Spleen (tissue), 13 donors: ENCODE measurements at regions of chr21 and their contacts with region 1.

Region 1: GRCh38 chr21:26170471-26171257 is at the start of gene APP:
- DNase-seq: peak; percentile 98
- H3K4me3 ChIP-seq: peak within 1 kb of the TSS; percentile 67 to 98 (median 94)
- H3K27ac ChIP-seq: peak within 1 kb of the TSS; percentile 76 to 89 (median 85)
- H3K4me1 ChIP-seq: peaks cover 0 to 53% (median 37%) of the 10 kb centered on the region in 6 donors
- H3K27me3 ChIP-seq: peaks cover 0 to 22% (median 0%) of the 10 kb centered on the region in 7 donors
- CTCF ChIP-seq: peak; percentile 52 to 100 (median 97)
- POLR2A ChIP-seq: peak in 2 of 3 donors; percentile 15 to 47
- total RNA-seq, gene APP: 202 to 398 (median 328) TPM

Region 2: GRCh38 chr21:24840287-24840686 is 1330.4 kb before region 1 on chr21:
- intact Hi-C with region 1: no loop called
- DNase-seq: peak; percentile 65
- H3K4me3 ChIP-seq: no peak overlapping the region
- H3K27ac ChIP-seq: no peak overlapping the region
- H3K4me1 ChIP-seq: no peaks in the 10 kb centered on the region
- H3K27me3 ChIP-seq: no peaks in the 10 kb centered on the region
- CTCF ChIP-seq: no peak
- POLR2A ChIP-seq: no peak

Region 3: DNA sequence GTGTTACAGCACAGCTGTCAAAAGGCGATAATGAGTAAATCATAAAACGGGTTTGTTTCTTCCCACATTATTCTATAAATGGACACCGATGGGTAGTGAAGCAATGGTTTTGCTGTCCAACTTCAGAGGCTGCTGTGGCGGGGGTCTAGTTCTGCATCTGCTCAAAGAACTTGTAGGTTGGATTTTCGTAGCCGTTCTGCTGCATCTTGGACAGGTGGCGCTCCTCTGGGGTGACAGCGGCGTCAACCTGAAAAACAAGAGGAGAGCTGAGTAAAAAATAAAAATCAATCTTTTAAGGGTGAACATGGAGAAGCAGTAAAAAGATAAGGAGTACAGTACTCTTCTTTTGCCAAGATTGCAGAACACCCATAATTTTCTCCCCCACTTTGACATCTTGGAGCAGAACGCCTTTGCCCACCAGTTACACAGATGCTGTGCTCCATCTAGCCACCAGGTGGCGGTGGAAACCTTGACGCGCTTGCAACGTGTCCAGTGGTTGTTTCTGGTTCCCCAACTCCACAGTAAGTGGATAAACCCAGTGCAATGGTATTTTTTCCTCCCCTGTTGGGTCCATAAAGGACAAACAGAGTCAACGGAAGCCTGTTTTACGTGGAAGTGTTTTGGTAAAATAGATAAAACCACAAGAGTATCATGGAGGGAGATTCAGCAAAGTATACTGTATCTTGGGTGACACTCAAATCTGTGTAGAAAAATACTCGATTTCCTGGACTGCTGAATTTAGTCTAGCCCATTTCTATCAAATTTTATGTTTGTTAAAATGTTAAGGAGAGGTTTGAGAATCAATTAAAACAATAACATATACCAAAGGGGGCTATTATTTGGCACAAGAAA is 288.9 kb before region 1 on chr21:
- intact Hi-C with region 1: loop called (anchors 5 kb)
- DNase-seq: peak; percentile 88
- H3K4me3 ChIP-seq: no peak overlapping the region
- H3K27ac ChIP-seq: no peak overlapping the region
- H3K4me1 ChIP-seq: no peaks in the 10 kb centered on the region
- H3K27me3 ChIP-seq: no peaks in the 10 kb centered on the region
- CTCF ChIP-seq: peak; percentile 66 to 91 (median 87)
- POLR2A ChIP-seq: no peak

Region 4: DNA sequence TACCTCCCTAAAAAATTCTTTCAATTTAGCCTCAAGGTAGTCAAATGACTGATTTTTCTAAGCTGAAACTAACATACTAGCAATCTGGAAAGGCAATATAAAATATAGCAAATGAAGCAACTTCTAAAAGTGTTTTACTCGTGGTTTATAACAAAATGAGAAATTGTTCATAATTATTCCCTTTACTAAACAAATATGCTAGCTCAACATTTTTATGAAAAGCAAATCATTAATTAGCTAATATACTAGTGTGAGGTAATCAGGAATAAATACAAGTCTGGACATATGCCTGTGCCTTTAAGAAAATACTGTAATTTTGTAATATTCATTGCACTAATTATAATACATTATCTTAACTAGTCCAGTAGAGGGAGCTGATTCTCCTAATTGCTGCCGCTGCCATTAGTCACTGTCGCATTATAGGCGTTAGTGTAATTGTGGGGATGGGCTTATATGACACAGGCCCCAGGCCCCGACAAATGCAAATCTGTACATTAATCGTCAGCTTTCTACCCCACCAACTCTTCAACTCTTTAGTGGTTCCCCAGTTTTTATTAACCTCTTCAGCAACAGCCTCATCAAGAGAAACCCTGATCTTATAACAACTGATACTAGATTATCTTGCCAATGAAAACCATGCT is 275.0 kb before region 1 on chr21:
- intact Hi-C with region 1: loop called (anchors 5 kb)
- DNase-seq: no peak
- H3K4me3 ChIP-seq: no peak overlapping the region
- H3K27ac ChIP-seq: no peak overlapping the region
- H3K4me1 ChIP-seq: peaks cover 0 to 11% (median 6%) of the 10 kb centered on the region in 6 donors
- H3K27me3 ChIP-seq: no peaks in the 10 kb centered on the region
- CTCF ChIP-seq: peak in 10 of 11 experiments; percentile 17 to 58 (median 48)
- POLR2A ChIP-seq: no peak